Right ventricle myocardium inferior (tissue), 1 donor: ENCODE measurements at regions of chr1 and their contacts with region 1.

Region 1: DNA sequence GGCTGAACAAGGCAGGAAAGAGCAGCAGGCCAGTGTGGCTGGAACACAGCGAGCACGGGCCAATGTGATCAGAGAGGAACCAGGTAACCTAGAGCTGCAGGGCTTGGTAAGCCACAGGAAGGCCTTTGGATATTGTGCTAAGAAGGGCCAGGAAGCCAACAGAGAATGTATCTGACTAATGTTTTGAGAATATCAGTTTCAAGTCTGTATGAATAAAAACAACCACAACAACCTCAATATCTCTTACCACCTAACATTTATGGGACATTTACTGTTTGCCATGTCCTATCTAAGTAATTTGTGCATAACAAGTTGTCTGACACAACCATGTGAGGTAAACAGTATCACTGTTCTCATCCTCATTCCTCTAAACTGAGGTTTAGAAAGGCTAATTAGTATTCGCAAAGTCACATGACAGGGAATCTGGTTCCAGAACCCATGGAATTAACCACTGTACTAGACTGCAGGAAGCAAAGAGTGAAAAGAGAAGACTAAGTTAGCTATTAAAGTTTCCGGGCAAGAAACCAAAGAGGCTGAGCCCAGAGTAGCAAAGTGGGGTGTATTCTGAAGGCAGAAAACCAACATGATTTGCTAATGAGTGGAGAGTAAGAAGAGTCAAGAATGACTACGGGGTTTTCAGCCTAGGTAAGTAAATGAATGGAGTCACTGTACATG is 38.9 kb downstream of the SPRTN start:
- DNase-seq: peak; percentile 48
- ATAC-seq: no peak

Region 2: DNA sequence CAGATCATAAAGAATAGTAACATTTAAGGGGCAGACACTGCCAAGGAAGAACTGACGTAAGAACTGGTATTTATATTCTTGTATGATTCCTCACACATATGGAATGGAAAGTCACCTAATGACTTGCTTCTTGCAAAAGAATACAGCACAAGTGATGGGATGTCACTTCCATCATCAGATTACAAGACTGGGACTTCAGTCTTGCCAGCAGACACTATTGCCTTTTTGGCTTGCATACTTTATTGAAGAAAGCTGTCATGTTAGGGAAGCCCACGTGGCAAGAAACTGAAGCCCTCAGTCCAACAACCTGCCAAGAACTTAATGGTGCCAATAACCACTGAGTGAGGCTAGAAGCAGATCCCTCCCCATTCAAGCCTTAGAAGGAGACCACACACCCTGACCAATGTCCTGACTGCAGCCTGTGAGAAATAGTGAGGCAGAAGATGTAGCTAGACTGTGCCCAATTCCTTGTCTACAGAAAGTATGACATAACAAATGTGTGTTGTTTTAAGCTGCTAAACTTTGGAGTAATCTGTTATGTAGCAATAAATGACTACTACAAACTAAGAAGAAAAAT is 33.1 kb after region 1 on chr1:
- intact Hi-C with region 1: loop called (anchors 5 kb)
- DNase-seq: no peak
- ATAC-seq: peak; percentile 61